CD4-positive, alpha-beta memory T cell (primary cell): ENCODE measurements at regions of chr7 and their contacts with region 1.

Region 1: GRCh38 chr7:91880413-91881241 is at the start of gene MTERF1:
- DNase-seq: peak; percentile 89 to 91 (median 90)
- H3K4me3 ChIP-seq: peak within 1 kb of the TSS; percentile 77 to 86
- H3K4me3 Mint-ChIP-seq: peak within 1 kb of the TSS; percentile 92 to 100 (median 98)
- H3K27ac ChIP-seq: peak within 1 kb of the TSS; percentile 71
- H3K27ac Mint-ChIP-seq: peak within 1 kb of the TSS; percentile 88 to 98 (median 95)
- H3K4me1 ChIP-seq: peaks cover 26% of the 10 kb centered on the region
- H3K4me1 Mint-ChIP-seq: peaks cover 30 to 46% (median 35%) of the 10 kb centered on the region in 4 donors
- H3K27me3 ChIP-seq: no peaks in the 10 kb centered on the region
- H3K27me3 Mint-ChIP-seq: no peaks in the 10 kb centered on the region
- total RNA-seq, gene MTERF1: 29.9 to 32.4 TPM

Region 2: DNA sequence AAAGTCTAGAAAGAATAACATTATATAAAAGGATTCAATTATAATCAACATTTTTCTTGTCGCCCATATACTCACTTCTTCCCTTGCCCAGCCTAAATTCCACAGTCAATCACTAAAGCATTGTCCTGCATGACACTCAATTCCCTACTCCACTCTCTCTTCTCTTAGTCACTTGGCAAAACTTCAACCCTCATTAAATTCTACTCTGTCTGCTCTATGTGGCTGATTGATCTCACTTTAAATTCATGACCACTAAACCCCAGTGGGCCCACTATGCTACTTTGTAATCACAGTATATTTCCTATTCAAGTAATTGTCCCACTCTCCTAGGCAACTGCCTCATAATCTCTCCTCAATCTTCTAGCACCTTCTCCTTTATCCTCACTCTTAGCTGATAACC is 54.2 kb before region 1 on chr7:
- CTCF ChIA-PET with region 1: interaction called, 8 read pairs
- POLR2A ChIA-PET with region 1: no interaction called
- intact Hi-C with region 1: loop called (anchors 1 kb)
- DNase-seq: no peak
- H3K4me3 ChIP-seq: no peak overlapping the region
- H3K4me3 Mint-ChIP-seq: no peak overlapping the region
- H3K27ac ChIP-seq: no peak overlapping the region
- H3K27ac Mint-ChIP-seq: peak overlapping the region in 1 of 7 donors; percentile 0
- H3K4me1 ChIP-seq: no peaks in the 10 kb centered on the region
- H3K4me1 Mint-ChIP-seq: no peaks in the 10 kb centered on the region
- H3K27me3 ChIP-seq: no peaks in the 10 kb centered on the region
- H3K27me3 Mint-ChIP-seq: no peaks in the 10 kb centered on the region

Region 3: GRCh38 chr7:91940572-91941341 is 60.1 kb after region 1 on chr7 and contains the start of gene AKAP9:
- CTCF ChIA-PET with region 1: interaction called, 42 read pairs
- POLR2A ChIA-PET with region 1: interaction called, 40 read pairs
- intact Hi-C with region 1: loop called (anchors 1 kb)
- DNase-seq: peak; percentile 88 to 90 (median 89)
- H3K4me3 ChIP-seq: peak within 1 kb of the TSS; percentile 75 to 92
- H3K4me3 Mint-ChIP-seq: peak within 1 kb of the TSS; percentile 91 to 100 (median 96)
- H3K27ac ChIP-seq: peak within 1 kb of the TSS; percentile 92
- H3K27ac Mint-ChIP-seq: peak within 1 kb of the TSS; percentile 94 to 100 (median 98)
- H3K4me1 ChIP-seq: peaks cover 39% of the 10 kb centered on the region
- H3K4me1 Mint-ChIP-seq: peaks cover 22 to 59% (median 37%) of the 10 kb centered on the region in 4 donors
- H3K27me3 ChIP-seq: no peaks in the 10 kb centered on the region
- H3K27me3 Mint-ChIP-seq: peaks cover 0 to 1% of the 10 kb centered on the region in 2 donors
- total RNA-seq, gene AKAP9: 88.5 to 91.4 TPM

Region 4: GRCh38 chr7:92178927-92179924 is 298.6 kb after region 1 on chr7 and contains the start of gene LRRD1:
- CTCF ChIA-PET with region 1: no interaction called
- POLR2A ChIA-PET with region 1: no interaction called
- intact Hi-C with region 1: loop called (anchors 1 kb)
- DNase-seq: peak; percentile 85 to 89 (median 88)
- H3K4me3 ChIP-seq: peak within 1 kb of the TSS in 1 of 2 donors; percentile 36
- H3K4me3 Mint-ChIP-seq: peak within 1 kb of the TSS; percentile 77 to 85 (median 80)
- H3K27ac ChIP-seq: peak within 1 kb of the TSS; percentile 2
- H3K27ac Mint-ChIP-seq: peak within 1 kb of the TSS in 4 of 7 donors; percentile 13 to 59 (median 40)
- H3K4me1 ChIP-seq: no peaks in the 10 kb centered on the region
- H3K4me1 Mint-ChIP-seq: peaks cover 2 to 8% (median 3%) of the 10 kb centered on the region in 4 donors
- H3K27me3 ChIP-seq: no peaks in the 10 kb centered on the region
- H3K27me3 Mint-ChIP-seq: no peaks in the 10 kb centered on the region
- total RNA-seq, gene LRRD1: not detected

Region 5: DNA sequence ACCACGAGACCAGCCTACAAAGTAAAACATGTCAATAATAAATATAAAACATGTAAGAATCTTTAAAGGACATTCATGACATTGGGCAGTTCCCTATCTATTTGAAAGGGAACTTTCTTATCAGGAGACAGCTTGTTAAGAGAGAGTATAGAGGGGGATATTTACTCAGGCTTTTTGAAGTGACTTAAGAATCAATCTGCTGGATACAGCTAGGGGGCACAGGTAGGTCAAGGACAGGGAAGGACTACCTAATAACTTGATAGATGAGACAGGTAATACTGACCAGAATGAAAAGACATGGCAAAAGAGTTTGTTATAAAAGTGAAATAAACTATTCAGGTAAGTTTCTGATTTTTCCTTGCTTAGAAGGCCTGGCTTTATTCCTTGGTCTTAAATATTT is 320.2 kb after region 1 on chr7:
- CTCF ChIA-PET with region 1: no interaction called
- POLR2A ChIA-PET with region 1: no interaction called
- intact Hi-C with region 1: no loop called
- DNase-seq: no peak
- H3K4me3 ChIP-seq: no peak overlapping the region
- H3K4me3 Mint-ChIP-seq: no peak overlapping the region
- H3K27ac ChIP-seq: no peak overlapping the region
- H3K27ac Mint-ChIP-seq: no peak overlapping the region
- H3K4me1 ChIP-seq: no peaks in the 10 kb centered on the region
- H3K4me1 Mint-ChIP-seq: peaks cover 0 to 3% (median under 1%) of the 10 kb centered on the region in 4 donors
- H3K27me3 ChIP-seq: no peaks in the 10 kb centered on the region
- H3K27me3 Mint-ChIP-seq: no peaks in the 10 kb centered on the region

Region 6: GRCh38 chr7:93117852-93118530 is 1237.4 kb after region 1 on chr7 and contains the start of gene SAMD9:
- CTCF ChIA-PET with region 1: no interaction called
- POLR2A ChIA-PET with region 1: no interaction called
- intact Hi-C with region 1: loop called (anchors 5 kb)
- DNase-seq: peak; percentile 71 to 89 (median 82)
- H3K4me3 ChIP-seq: peak within 1 kb of the TSS; percentile 65 to 96
- H3K4me3 Mint-ChIP-seq: peak within 1 kb of the TSS; percentile 88 to 94 (median 91)
- H3K27ac ChIP-seq: peak within 1 kb of the TSS; percentile 75
- H3K27ac Mint-ChIP-seq: peak within 1 kb of the TSS; percentile 80 to 96 (median 95)
- H3K4me1 ChIP-seq: peaks cover 37% of the 10 kb centered on the region
- H3K4me1 Mint-ChIP-seq: peaks cover 33 to 60% (median 49%) of the 10 kb centered on the region in 4 donors
- H3K27me3 ChIP-seq: no peaks in the 10 kb centered on the region
- H3K27me3 Mint-ChIP-seq: no peaks in the 10 kb centered on the region
- total RNA-seq, gene SAMD9: 55.1 to 56.6 TPM